ENCODE measurements at regions of chr13 and their contacts with region 1.

Region 1: DNA sequence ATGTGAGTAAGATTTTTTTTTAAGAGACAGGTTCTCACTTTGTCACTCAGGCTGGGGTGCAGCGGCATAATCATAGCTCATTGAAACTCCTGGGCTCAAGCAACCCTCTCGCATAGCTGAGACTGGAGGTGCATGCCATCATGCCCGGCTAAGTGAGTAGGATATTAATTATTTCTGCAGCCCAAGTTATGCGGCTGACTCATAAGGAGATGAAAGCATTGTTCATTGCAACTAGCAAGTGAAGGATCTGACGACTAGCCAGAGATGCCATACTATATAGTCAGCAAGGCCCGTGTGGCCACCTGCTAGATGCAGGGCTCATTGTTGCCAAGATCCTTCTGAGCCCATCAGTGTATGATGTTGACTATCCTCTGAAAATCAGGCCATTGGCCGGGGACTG is 45.2 kb downstream of the ABCC4 start:
- DNase-seq: peak; percentile 58 to 65
- ATAC-seq: peak; percentile 97 to 98
- H3K4me3 ChIP-seq: no peak overlapping the region
- H3K27ac ChIP-seq: peak overlapping the region in 3 of 4 donors; percentile 6 to 60 (median 19)
- H3K4me1 ChIP-seq: peaks cover 2 to 6% of the 10 kb centered on the region in 2 donors
- H3K27me3 ChIP-seq: no peaks in the 10 kb centered on the region
- CTCF ChIP-seq: no peak
- POLR2A ChIP-seq: no peak

Region 2: DNA sequence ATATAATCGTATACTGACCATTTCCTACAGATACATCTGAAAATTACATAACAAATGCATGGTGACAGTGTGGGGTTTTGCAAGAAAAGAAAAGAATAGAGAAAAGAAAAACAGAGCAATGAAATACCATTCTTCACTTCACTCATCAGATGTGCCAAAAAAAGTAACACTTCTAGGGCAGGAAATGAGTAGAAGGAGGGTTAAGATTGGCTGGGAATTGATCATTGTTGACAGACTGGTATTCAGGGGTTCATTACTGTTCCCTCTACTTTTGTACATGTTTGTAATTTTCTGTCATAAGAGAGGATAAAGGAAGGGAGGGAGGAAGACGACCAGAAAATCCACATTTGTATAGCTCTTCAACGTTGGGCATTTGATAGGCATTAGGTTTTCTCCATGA is 13.7 kb after region 1 on chr13:
- in situ Hi-C with region 1: no loop called
- intact Hi-C with region 1: loop called (anchors 2 kb)
- DNase-seq: no peak
- ATAC-seq: no peak
- H3K4me3 ChIP-seq: no peak overlapping the region
- H3K27ac ChIP-seq: peak overlapping the region; percentile 83 to 93 (median 89)
- H3K4me1 ChIP-seq: peaks cover 14 to 27% of the 10 kb centered on the region in 2 donors
- H3K27me3 ChIP-seq: no peaks in the 10 kb centered on the region
- CTCF ChIP-seq: no peak
- POLR2A ChIP-seq: no peak

Region 3: GRCh38 chr13:95289020-95289444 is 32.9 kb after region 1 on chr13:
- in situ Hi-C with region 1: no loop called
- intact Hi-C with region 1: no loop called
- DNase-seq: no peak
- ATAC-seq: no peak
- H3K4me3 ChIP-seq: no peak overlapping the region
- H3K27ac ChIP-seq: no peak overlapping the region
- H3K4me1 ChIP-seq: peaks cover 0 to 4% of the 10 kb centered on the region in 2 donors
- H3K27me3 ChIP-seq: no peaks in the 10 kb centered on the region
- CTCF ChIP-seq: no peak
- POLR2A ChIP-seq: no peak

Measured in gastrocnemius medialis (tissue), 4 donors.